Endothelial cell of umbilical vein (primary cell): ENCODE measurements at regions of chr21 and their contacts with region 1.

Region 1: GRCh38 chr21:32604464-32604863 is 7.7 kb downstream of the CFAP298 start:
- DNase-seq: no peak
- H3K4me3 ChIP-seq: no peak overlapping the region
- H3K27ac ChIP-seq: no peak overlapping the region
- H3K4me1 ChIP-seq: no peaks in the 10 kb centered on the region
- H3K27me3 ChIP-seq: no peaks in the 10 kb centered on the region
- CTCF ChIP-seq: no peak
- POLR2A ChIP-seq: no peak

Region 2: DNA sequence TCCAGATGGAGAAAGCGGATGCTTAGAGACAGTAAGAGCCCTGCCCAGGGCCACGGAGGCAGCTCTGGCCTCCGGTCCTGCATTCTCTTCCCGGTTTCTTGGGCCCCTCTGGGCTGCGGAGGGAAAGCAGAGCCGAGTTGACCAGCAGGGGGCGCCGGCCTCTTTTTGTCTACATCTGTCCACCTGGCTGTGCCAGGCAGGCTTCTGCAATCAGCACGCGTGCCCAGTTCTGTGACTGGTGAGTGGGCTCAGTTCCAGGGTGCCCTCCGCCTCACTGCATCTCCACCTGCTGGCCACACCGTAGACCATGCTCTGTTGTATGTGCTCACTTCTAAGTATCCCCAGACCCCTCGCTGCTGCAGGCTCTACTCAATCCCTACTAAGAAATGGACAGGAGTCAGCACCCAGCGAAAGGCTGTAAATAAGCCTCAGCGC is 738.4 kb before region 1 on chr21:
- CTCF ChIA-PET with region 1: interaction called, 31 read pairs
- POLR2A ChIA-PET with region 1: no interaction called
- dilution Hi-C with region 1: no loop called
- intact Hi-C with region 1: loop called (anchors 1 kb)
- DNase-seq: peak; percentile 72
- H3K4me3 ChIP-seq: no peak overlapping the region
- H3K27ac ChIP-seq: no peak overlapping the region
- H3K4me1 ChIP-seq: no peaks in the 10 kb centered on the region
- H3K27me3 ChIP-seq: peaks cover 7 to 15% of the 10 kb centered on the region in 2 experiments
- CTCF ChIP-seq: peak; percentile 81 to 95
- POLR2A ChIP-seq: no peak

Region 3: DNA sequence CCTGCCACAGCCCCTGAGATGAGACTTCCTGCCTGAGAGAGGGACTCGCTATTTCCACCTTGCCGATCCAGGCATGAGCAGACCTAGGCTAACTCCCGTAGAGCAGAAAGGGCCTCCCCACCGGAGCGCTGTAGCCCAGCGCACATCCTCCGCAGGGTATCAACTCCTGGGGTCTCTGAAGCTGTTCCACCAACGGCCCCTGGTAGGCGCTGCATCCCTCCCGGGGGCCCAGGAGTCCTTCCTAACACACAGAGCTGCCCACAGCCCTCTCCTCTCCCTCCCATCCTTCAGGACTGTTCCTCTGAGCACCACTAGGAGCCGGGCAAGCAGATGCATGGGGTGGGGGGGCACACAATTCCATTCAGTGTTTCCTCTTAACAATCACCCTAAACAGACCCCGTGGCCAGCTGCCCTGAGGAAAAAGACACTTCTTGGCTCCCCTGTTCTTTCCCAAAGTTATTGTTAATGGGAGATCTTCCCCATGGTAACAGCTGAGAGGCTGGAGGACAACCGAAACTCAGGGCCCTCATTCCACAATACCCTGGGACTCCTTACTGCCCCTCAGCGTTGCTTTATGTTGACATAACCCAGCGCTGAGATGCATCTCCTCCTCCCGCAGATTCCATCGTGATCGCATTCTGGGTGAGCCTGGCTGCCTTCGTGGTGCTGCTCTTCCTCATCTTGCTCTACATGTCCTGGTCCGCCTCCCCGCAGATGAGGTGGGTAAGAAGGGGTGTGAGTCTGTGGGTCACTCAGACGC is 298.3 kb before region 1 on chr21:
- CTCF ChIA-PET with region 1: interaction called, 13 read pairs
- POLR2A ChIA-PET with region 1: no interaction called
- dilution Hi-C with region 1: no loop called
- intact Hi-C with region 1: loop called (anchors 5 kb)
- DNase-seq: peak; percentile 25
- H3K4me3 ChIP-seq: no peak overlapping the region
- H3K27ac ChIP-seq: no peak overlapping the region
- H3K4me1 ChIP-seq: no peaks in the 10 kb centered on the region
- H3K27me3 ChIP-seq: no peaks in the 10 kb centered on the region
- CTCF ChIP-seq: peak; percentile 37 to 45
- POLR2A ChIP-seq: no peak

Region 4: DNA sequence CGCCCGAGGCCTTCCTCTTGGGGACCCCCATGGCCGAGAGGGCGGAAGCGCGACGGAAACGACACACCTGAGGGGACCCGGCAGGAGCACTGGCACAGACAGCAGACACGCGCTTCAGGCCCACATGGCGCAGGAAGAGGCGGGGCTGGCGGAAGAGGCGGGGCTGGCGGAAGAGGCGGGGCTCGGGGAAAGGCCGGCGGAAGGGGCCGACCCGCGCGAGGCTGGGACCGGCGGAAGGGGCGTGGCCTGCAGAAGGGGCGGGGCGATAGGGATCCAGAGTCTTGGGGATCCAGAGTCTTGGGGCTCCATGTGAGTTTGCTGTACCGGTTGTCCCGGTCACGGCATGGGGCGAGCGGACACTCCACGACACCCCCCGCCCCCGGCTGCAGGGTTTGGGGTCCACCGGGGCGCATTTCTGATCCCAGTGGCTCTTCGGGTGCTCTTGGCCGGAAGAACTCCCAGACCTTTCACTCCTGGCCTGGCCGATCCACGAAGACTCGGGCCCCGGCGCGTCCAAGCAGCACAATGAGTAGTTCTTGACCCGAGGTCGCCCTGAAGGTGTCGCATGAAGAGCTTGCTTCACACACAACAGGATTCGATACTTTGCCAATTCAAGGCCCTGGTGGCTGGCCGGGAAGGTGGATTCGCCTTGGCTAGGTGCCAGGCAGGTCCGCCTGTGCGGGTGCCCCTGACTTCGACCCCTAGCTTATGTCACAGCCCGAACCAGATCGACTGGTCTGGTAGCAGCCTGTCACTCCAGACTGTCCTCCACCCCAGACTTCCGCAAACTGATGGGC is 211.4 kb before region 1 on chr21 and contains the start of gene URB1:
- CTCF ChIA-PET with region 1: interaction called, 26 read pairs
- POLR2A ChIA-PET with region 1: no interaction called
- dilution Hi-C with region 1: no loop called
- intact Hi-C with region 1: no loop called
- DNase-seq: peak; percentile 87
- H3K4me3 ChIP-seq: peak within 1 kb of the TSS; percentile 75 to 79 (median 78)
- H3K27ac ChIP-seq: peak within 1 kb of the TSS; percentile 62
- H3K4me1 ChIP-seq: peaks cover 13% of the 10 kb centered on the region
- H3K27me3 ChIP-seq: no peaks in the 10 kb centered on the region
- CTCF ChIP-seq: no peak
- POLR2A ChIP-seq: peak; percentile 92
- total RNA-seq, gene URB1: 21.4 and 27.3 TPM in 2 replicates

Region 5: GRCh38 chr21:32484706-32485380 is 119.6 kb before region 1 on chr21:
- CTCF ChIA-PET with region 1: no interaction called
- POLR2A ChIA-PET with region 1: no interaction called
- dilution Hi-C with region 1: no loop called
- intact Hi-C with region 1: no loop called
- DNase-seq: no peak
- H3K4me3 ChIP-seq: no peak overlapping the region
- H3K27ac ChIP-seq: no peak overlapping the region
- H3K4me1 ChIP-seq: peaks cover under 1% of the 10 kb centered on the region
- H3K27me3 ChIP-seq: no peaks in the 10 kb centered on the region
- CTCF ChIP-seq: no peak
- POLR2A ChIP-seq: no peak